ENCODE measurements at regions of chr9 and their contacts with region 1.

Region 1: DNA sequence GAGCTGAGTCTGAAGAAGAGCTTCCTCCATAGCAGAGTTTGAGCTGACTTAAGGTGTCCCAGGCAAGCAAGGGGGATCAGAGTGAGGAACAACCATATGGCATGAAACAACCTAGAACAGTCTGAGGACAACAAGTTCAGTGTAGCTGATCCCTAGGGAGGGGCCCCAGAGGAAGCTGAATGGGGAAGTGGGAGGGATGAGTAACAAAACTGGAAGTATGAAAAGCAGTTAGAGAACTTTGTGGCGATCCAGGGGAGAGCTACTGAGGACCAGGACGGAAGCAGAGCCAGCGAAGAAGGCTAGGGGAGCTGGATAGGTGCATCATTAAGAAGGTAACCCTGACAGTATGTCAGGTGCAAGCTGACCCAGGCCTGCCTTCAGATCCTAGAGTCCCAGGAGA is 580.8 kb downstream of the BNC2 start:
- DNase-seq: no peak
- H3K4me3 ChIP-seq: no peak overlapping the region
- H3K27ac ChIP-seq: no peak overlapping the region
- H3K4me1 ChIP-seq: no peaks in the 10 kb centered on the region
- H3K27me3 ChIP-seq: no peaks in the 10 kb centered on the region
- CTCF ChIP-seq: no peak
- POLR2A ChIP-seq: no peak

Region 2: GRCh38 chr9:15155826-15156225 is 1133.8 kb before region 1 on chr9:
- intact Hi-C with region 1: no loop called
- DNase-seq: no peak
- H3K4me3 ChIP-seq: no peak overlapping the region
- H3K27ac ChIP-seq: peak overlapping the region; percentile 67 to 72
- H3K4me1 ChIP-seq: peaks cover 0 to 7% of the 10 kb centered on the region in 2 donors
- H3K27me3 ChIP-seq: no peaks in the 10 kb centered on the region
- CTCF ChIP-seq: no peak
- POLR2A ChIP-seq: no peak

Region 3: DNA sequence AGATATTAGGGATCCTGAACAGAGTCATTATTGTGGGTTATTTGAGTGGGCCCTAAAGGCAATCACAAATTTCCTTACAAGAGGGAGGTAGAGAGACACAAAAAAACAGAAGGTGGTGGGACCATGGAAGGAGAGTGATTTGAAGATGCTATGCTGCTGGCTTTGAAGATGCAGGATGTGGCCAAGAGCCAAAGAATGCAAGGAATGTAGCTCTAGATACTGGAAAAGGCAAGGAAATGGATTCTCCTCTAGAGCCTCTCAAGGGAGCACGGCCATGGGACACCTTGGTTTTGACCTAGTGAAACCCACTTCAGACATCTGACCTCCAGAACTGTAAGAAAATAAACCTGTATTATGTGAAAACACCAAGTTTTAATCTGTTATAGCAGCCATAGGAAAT is 1036.4 kb before region 1 on chr9:
- intact Hi-C with region 1: no loop called
- DNase-seq: no peak
- H3K4me3 ChIP-seq: no peak overlapping the region
- H3K27ac ChIP-seq: no peak overlapping the region
- H3K4me1 ChIP-seq: no peaks in the 10 kb centered on the region
- H3K27me3 ChIP-seq: no peaks in the 10 kb centered on the region
- CTCF ChIP-seq: no peak
- POLR2A ChIP-seq: no peak

Region 4: DNA sequence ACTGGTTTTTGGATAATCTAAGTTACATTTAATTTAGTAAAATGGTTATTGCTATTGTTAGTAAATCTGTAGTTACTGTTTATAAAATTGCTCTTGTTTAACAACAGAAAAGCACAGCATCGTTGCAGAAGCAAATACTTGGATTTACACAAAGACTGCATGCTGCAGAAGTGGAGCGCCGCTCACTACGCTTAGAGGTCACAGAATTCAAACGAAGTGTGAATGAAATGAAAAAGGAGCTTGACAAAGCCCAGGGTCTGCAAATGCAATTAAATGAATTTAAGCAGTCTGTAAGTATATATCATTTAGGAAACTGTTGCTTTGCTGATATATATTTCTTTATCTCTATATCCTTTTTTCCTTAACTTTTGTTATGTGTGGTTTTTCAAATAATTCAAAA is 510.8 kb before region 1 on chr9:
- intact Hi-C with region 1: loop called (anchors 5 kb)
- DNase-seq: no peak
- H3K4me3 ChIP-seq: no peak overlapping the region
- H3K27ac ChIP-seq: no peak overlapping the region
- H3K4me1 ChIP-seq: no peaks in the 10 kb centered on the region
- H3K27me3 ChIP-seq: no peaks in the 10 kb centered on the region
- CTCF ChIP-seq: no peak
- POLR2A ChIP-seq: no peak

Region 5: GRCh38 chr9:16221366-16221765 is 68.3 kb before region 1 on chr9:
- intact Hi-C with region 1: no loop called
- DNase-seq: no peak
- H3K4me3 ChIP-seq: no peak overlapping the region
- H3K27ac ChIP-seq: peak overlapping the region in 1 of 2 donors; percentile 48
- H3K4me1 ChIP-seq: no peaks in the 10 kb centered on the region
- H3K27me3 ChIP-seq: no peaks in the 10 kb centered on the region
- CTCF ChIP-seq: no peak
- POLR2A ChIP-seq: no peak

Measured in breast epithelium (tissue), 4 donors.